ENCODE measurements at regions of chr17 and their contacts with region 1.

Region 1: GRCh38 chr17:64020056-64020766 is at the start of gene ICAM2:
- DNase-seq: peak; percentile 83 to 99 (median 90)
- ATAC-seq: peak; percentile 73
- H3K4me3 ChIP-seq: peak within 1 kb of the TSS; percentile 78 to 87
- H3K4me3 Mint-ChIP-seq: peak within 1 kb of the TSS; percentile 99
- H3K27ac ChIP-seq: peak within 1 kb of the TSS; percentile 95 to 99
- H3K27ac Mint-ChIP-seq: peak within 1 kb of the TSS; percentile 100
- H3K4me1 ChIP-seq: peaks cover 72% of the 10 kb centered on the region
- H3K4me1 Mint-ChIP-seq: peaks cover 79% of the 10 kb centered on the region
- H3K27me3 ChIP-seq: no peaks in the 10 kb centered on the region
- H3K27me3 Mint-ChIP-seq: no peaks in the 10 kb centered on the region
- CTCF ChIP-seq: no peak
- total RNA-seq, gene ICAM2: 38.0 to 38.7 TPM

Region 2: DNA sequence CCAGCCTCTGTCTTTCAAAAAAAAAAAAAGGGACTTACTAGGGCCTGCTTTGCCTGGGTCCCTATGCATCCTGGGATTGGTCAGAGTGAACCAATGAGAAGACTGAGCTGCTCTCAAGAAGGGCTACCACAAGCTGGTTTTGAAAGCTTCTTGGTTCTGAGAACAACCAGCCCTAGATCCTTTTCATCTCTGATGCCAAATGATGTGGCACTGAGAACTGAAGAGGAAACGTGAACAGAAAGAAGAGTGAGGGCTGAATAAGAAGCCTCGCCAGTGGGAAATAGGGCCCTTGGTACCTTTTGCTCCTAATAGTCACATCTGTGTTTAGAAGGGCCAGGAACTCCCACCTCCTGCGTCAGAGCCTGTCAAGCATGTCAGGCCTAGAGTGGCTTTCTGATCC is 408.9 kb before region 1 on chr17:
- CTCF ChIA-PET with region 1: no interaction called
- POLR2A ChIA-PET with region 1: no interaction called
- intact Hi-C with region 1: no loop called
- DNase-seq: peak in 1 of 9 experiments; percentile 37
- ATAC-seq: peak; percentile 13
- H3K4me3 ChIP-seq: no peak overlapping the region
- H3K4me3 Mint-ChIP-seq: no peak overlapping the region
- H3K27ac ChIP-seq: peak overlapping the region in 1 of 2 experiments; percentile 39
- H3K27ac Mint-ChIP-seq: peak overlapping the region; percentile 91
- H3K4me1 ChIP-seq: peaks cover 28% of the 10 kb centered on the region
- H3K4me1 Mint-ChIP-seq: peaks cover 31% of the 10 kb centered on the region
- H3K27me3 ChIP-seq: no peaks in the 10 kb centered on the region
- H3K27me3 Mint-ChIP-seq: no peaks in the 10 kb centered on the region
- CTCF ChIP-seq: no peak

Region 3: DNA sequence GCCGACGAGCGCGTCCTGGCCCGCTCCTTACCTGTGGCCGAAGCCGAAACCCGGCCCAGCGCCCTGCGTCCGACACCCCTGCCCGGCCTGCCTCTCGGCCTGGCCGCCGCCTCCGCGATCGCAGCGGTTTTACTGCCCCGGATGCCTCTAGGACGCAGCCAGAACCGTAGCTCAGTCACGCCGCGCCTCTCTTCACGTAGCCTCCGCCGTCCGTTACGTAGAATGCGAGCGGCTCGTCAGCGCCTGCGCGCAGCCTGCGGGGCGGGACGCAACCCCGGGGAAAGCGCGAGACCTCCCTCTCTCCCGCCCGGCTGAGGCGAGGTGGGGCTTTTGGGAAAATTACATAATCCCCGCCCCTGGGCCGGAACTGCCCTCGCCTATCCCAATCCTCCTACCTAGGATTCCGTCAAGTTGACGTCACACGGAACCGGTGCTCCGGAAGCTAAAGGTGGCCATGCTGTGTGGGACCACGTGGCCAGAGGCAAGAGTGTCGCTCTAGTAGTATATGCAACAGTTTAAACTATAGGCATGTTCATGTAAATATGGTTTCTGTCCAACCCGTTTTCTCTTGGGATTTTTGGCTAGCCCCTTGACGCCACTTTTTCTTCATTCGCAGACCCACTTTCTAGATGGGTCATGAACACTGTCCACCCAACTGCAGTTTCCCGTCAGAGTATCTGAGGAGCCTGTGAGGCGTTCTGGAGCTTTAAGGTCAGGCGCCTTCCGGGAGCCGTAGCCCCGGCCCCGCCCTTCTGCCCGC is 246.7 kb before region 1 on chr17 and contains the start of gene CCDC47:
- CTCF ChIA-PET with region 1: no interaction called
- POLR2A ChIA-PET with region 1: no interaction called
- intact Hi-C with region 1: loop called in 1 of 2 experiments (anchors 5 kb)
- DNase-seq: peak; percentile 95 to 100 (median 97)
- ATAC-seq: peak; percentile 79
- H3K4me3 ChIP-seq: peak within 1 kb of the TSS; percentile 84 to 95
- H3K4me3 Mint-ChIP-seq: peak within 1 kb of the TSS; percentile 97
- H3K27ac ChIP-seq: peak within 1 kb of the TSS; percentile 86 to 97
- H3K27ac Mint-ChIP-seq: peak within 1 kb of the TSS; percentile 98
- H3K4me1 ChIP-seq: peaks cover 41% of the 10 kb centered on the region
- H3K4me1 Mint-ChIP-seq: peaks cover 60% of the 10 kb centered on the region
- H3K27me3 ChIP-seq: no peaks in the 10 kb centered on the region
- H3K27me3 Mint-ChIP-seq: no peaks in the 10 kb centered on the region
- CTCF ChIP-seq: no peak
- total RNA-seq, gene CCDC47: 33.1 to 34.6 TPM

Region 4: GRCh38 chr17:63946440-63947367 is 73.5 kb before region 1 on chr17:
- CTCF ChIA-PET with region 1: interaction called, 31 read pairs
- POLR2A ChIA-PET with region 1: interaction called, 6 read pairs
- intact Hi-C with region 1: loop called in 1 of 2 experiments (anchors 1 kb)
- DNase-seq: peak; percentile 22 to 77 (median 60)
- ATAC-seq: peak; percentile 78
- H3K4me3 ChIP-seq: peak overlapping the region; percentile 29 to 47
- H3K4me3 Mint-ChIP-seq: peak overlapping the region; percentile 74
- H3K27ac ChIP-seq: peak overlapping the region in 1 of 2 experiments; percentile 43
- H3K27ac Mint-ChIP-seq: peak overlapping the region; percentile 72
- H3K4me1 ChIP-seq: peaks cover 20% of the 10 kb centered on the region
- H3K4me1 Mint-ChIP-seq: peaks cover 20% of the 10 kb centered on the region
- H3K27me3 ChIP-seq: no peaks in the 10 kb centered on the region
- H3K27me3 Mint-ChIP-seq: no peaks in the 10 kb centered on the region
- CTCF ChIP-seq: peak; percentile 69

Region 5: GRCh38 chr17:63998050-63998720 is 22.0 kb before region 1 on chr17 and contains the start of gene PRR29:
- CTCF ChIA-PET with region 1: interaction called, 293 read pairs
- POLR2A ChIA-PET with region 1: interaction called, 20 read pairs
- intact Hi-C with region 1: loop called (anchors 1 kb)
- DNase-seq: peak; percentile 56 to 90 (median 75)
- ATAC-seq: peak; percentile 69
- H3K4me3 ChIP-seq: peak within 1 kb of the TSS; percentile 64 to 78
- H3K4me3 Mint-ChIP-seq: peak within 1 kb of the TSS; percentile 89
- H3K27ac ChIP-seq: no peak within 1 kb of the TSS
- H3K27ac Mint-ChIP-seq: peak within 1 kb of the TSS; percentile 75
- H3K4me1 ChIP-seq: peaks cover 29% of the 10 kb centered on the region
- H3K4me1 Mint-ChIP-seq: peaks cover 40% of the 10 kb centered on the region
- H3K27me3 ChIP-seq: no peaks in the 10 kb centered on the region
- H3K27me3 Mint-ChIP-seq: no peaks in the 10 kb centered on the region
- CTCF ChIP-seq: no peak
- total RNA-seq, gene PRR29: 0.24 to 0.97 TPM

Region 6: GRCh38 chr17:64051153-64051552 is 30.9 kb after region 1 on chr17:
- CTCF ChIA-PET with region 1: interaction called, 155 read pairs
- POLR2A ChIA-PET with region 1: interaction called, 10 read pairs
- intact Hi-C with region 1: no loop called
- DNase-seq: peak in 3 of 9 experiments; percentile 10 to 78 (median 67)
- ATAC-seq: peak; percentile 99
- H3K4me3 ChIP-seq: no peak overlapping the region
- H3K4me3 Mint-ChIP-seq: no peak overlapping the region
- H3K27ac ChIP-seq: peak overlapping the region; percentile 6 to 70
- H3K27ac Mint-ChIP-seq: peak overlapping the region; percentile 88
- H3K4me1 ChIP-seq: peaks cover 26% of the 10 kb centered on the region
- H3K4me1 Mint-ChIP-seq: peaks cover 35% of the 10 kb centered on the region
- H3K27me3 ChIP-seq: no peaks in the 10 kb centered on the region
- H3K27me3 Mint-ChIP-seq: no peaks in the 10 kb centered on the region
- CTCF ChIP-seq: no peak

Measured in CD8-positive, alpha-beta T cell (primary cell).